ENCODE measurements at regions of chrX and their contacts with region 1.

Region 1: GRCh38 chrX:17944833-17945497 is 83.9 kb upstream of the RAI2 start:
- DNase-seq: peak in 1 of 2 experiments; percentile 4
- H3K4me3 ChIP-seq: no peak overlapping the region
- H3K4me3 Mint-ChIP-seq: no peak overlapping the region
- H3K27ac Mint-ChIP-seq: no peak overlapping the region
- H3K4me1 ChIP-seq: no peaks in the 10 kb centered on the region
- H3K4me1 Mint-ChIP-seq: no peaks in the 10 kb centered on the region
- H3K27me3 ChIP-seq: no peaks in the 10 kb centered on the region
- H3K27me3 Mint-ChIP-seq: peaks cover 14% of the 10 kb centered on the region
- CTCF ChIP-seq: peak; percentile 30 to 36

Region 2: GRCh38 chrX:18206657-18207056 is 261.7 kb after region 1 on chrX:
- CTCF ChIA-PET with region 1: no interaction called
- POLR2A ChIA-PET with region 1: no interaction called
- intact Hi-C with region 1: loop called (anchors 5 kb)
- DNase-seq: no peak
- H3K4me3 ChIP-seq: no peak overlapping the region
- H3K4me3 Mint-ChIP-seq: no peak overlapping the region
- H3K27ac Mint-ChIP-seq: no peak overlapping the region
- H3K4me1 ChIP-seq: no peaks in the 10 kb centered on the region
- H3K4me1 Mint-ChIP-seq: no peaks in the 10 kb centered on the region
- H3K27me3 ChIP-seq: no peaks in the 10 kb centered on the region
- H3K27me3 Mint-ChIP-seq: peaks cover 13% of the 10 kb centered on the region
- CTCF ChIP-seq: no peak

Region 3: DNA sequence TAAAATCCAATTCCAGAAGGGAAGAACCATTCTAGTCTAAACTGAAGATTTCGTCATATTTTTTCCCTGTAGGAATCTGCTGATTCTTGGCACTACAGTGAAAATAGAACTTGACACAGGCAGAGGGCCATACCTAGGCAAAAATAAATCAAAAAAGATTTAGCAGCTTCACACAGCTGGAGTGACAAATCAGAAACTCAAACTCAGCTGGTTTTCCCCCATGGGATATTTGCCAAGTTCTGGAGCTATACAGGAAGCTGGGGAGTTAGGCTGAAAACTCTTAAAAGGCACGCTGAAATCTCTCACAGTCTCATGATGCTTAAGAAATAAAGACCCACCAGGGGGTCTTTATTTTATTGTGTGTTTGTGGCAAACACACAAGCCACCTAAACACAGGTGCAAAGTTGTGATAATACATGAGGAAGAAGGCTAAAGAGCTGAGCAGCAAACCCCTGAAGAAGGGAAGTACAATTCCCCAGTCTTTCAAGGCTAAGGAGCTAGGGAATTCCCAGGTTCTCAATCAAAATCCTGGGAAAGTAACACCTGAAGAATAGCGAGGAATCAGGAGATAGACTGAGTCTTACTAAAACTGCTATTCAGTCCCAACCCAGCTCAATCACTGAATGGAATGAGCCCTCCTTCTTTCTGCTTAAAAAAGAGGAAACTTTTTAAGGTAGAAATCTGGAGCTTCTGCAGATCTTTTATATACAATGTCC is 307.8 kb after region 1 on chrX:
- CTCF ChIA-PET with region 1: no interaction called
- POLR2A ChIA-PET with region 1: no interaction called
- intact Hi-C with region 1: no loop called
- DNase-seq: no peak
- H3K4me3 ChIP-seq: no peak overlapping the region
- H3K4me3 Mint-ChIP-seq: no peak overlapping the region
- H3K27ac Mint-ChIP-seq: no peak overlapping the region
- H3K4me1 ChIP-seq: no peaks in the 10 kb centered on the region
- H3K4me1 Mint-ChIP-seq: no peaks in the 10 kb centered on the region
- H3K27me3 ChIP-seq: no peaks in the 10 kb centered on the region
- H3K27me3 Mint-ChIP-seq: no peaks in the 10 kb centered on the region
- CTCF ChIP-seq: no peak

Measured in Caco-2 (cell line).